ENCODE measurements at regions of chr6 and their contacts with region 1.

Region 1: GRCh38 chr6:73671911-73672685 is 18.3 kb upstream of the SLC17A5 start:
- DNase-seq: no peak
- CTCF ChIP-seq: no peak

Region 2: DNA sequence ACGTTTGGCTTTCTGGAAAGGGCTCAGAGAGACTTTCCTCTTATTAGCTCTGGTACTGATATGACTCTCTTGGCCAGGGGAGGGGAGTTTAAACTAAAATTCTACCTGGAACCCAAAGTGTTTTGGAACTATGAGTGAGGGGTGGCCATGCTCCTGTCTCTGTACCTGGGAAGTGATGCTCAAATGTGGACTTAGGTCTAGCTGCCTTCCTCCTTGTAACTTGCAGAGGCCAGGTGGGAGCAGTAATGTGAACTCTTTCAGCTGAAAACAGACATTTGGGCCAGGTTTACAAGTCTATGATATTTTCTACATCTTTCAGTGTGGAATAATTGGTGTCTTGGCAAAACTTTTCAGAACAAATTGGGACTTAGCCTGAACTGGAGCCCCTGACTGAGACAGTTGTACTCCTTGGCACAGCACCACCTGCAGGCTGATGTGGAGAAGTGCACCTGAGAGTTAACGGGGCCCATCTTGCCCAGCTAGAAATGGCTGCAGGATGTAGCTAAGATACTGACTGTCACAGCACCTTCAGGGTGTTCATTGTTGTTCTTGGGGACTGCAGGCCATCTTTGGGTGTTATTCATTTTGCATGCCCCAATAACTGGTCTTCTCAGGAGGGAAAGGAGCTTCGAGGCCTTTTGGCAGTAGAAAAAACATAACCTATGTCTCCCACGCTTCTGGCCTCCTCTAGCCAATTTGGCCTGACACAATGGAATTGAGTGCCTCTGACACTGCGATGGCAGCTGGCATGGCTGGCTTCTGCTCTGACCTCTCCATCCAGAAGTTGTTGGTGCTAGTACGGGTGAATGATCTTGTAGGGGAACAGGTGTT is 61.0 kb after region 1 on chr6:
- in situ Hi-C with region 1: loop called (anchors 5 kb)
- DNase-seq: peak; percentile 55
- CTCF ChIP-seq: peak; percentile 89

Region 3: GRCh38 chr6:74735304-74735703 is 1063.2 kb after region 1 on chr6:
- in situ Hi-C with region 1: no loop called
- DNase-seq: no peak
- CTCF ChIP-seq: no peak

Measured in GM13976 (cell line).